H1 (cell line): ENCODE measurements at regions of chr19 and their contacts with region 1.

Region 1: GRCh38 chr19:55258828-55259539 is at the start of gene PPP6R1:
- DNase-seq: peak; percentile 83 to 99
- H3K4me3 ChIP-seq: peak within 1 kb of the TSS; percentile 79 to 89 (median 82)
- H3K27ac ChIP-seq: peak within 1 kb of the TSS; percentile 65; the same call in 1 of the 2 replicates
- H3K4me1 ChIP-seq: peaks cover under 1 to 19% (median 15%) of the 10 kb centered on the region in 4 experiments; a peak in 6 of 7 replicates
- H3K27me3 ChIP-seq: no peaks in the 10 kb centered on the region
- CTCF ChIP-seq: 0 out of 4 replicates have a peak, but pooled peaks of 1 of the 3 experiments have one; percentile 11
- EP300 ChIP-seq: no peak
- POLR2A ChIP-seq: peak in 1 of 2 experiments; percentile 82; a peak in 2 of 3 replicates
- RAD21 ChIP-seq: peak in 1 of 2 experiments; percentile 7; a peak in 1 of 4 replicates
- total RNA-seq, gene PPP6R1: 74.4 and 75.6 TPM in 2 replicates

Region 2: DNA sequence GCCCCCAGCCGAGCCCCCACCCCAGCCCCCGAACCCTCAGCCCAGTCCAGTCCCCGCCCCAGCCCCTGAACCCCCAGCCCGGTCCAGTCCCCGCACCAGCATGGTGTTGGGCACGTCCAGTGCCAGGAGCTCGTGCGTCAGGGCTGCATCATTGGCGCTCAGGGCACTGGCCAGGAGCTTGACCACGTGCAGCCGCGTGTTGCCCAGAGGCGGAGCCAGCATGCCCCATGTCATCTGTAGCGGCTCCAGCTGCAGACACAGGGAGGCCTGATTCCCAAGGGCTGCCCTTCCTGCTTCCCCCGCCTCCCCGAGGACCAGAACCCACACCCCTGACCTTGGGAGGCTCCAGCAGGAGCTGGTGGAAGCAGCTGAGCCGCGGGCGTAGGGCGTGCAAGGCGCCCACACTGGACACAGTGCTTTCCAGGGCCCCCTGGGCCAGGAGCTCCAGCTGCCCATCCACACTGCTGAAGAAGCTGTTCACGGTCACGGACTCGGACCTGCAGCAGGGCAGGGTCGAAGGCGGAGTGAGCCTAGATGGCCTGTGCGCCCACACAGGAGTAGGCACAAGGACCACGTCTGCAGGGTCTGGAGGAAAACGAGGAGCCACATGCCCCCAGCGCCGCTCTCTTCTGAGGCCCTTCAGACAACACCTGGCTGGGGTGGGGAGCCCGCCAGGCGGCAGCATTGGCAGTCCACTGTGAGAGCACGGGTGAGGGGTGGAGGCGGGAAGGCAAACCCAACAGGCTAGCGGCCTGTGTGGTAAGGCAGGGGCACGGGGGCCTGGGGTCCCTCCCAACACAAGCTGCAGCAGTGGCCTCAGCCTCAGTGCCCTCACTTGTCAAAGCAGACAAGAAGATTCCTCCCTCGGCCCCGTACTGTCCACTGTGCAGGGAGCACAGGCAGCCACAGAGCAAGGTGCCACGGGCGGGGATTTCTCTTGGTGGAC is 17.6 kb before region 1 on chr19:
- CTCF ChIA-PET with region 1: interaction called, 32 read pairs
- POLR2A ChIA-PET with region 1: interaction called, 4 read pairs
- DNase-seq: no peak
- H3K4me3 ChIP-seq: no peak overlapping the region
- H3K27ac ChIP-seq: no peak overlapping the region
- H3K4me1 ChIP-seq: no peaks in the 10 kb centered on the region
- H3K27me3 ChIP-seq: no peaks in the 10 kb centered on the region
- CTCF ChIP-seq: no peak
- EP300 ChIP-seq: no peak
- POLR2A ChIP-seq: no peak
- RAD21 ChIP-seq: no peak

Region 3: DNA sequence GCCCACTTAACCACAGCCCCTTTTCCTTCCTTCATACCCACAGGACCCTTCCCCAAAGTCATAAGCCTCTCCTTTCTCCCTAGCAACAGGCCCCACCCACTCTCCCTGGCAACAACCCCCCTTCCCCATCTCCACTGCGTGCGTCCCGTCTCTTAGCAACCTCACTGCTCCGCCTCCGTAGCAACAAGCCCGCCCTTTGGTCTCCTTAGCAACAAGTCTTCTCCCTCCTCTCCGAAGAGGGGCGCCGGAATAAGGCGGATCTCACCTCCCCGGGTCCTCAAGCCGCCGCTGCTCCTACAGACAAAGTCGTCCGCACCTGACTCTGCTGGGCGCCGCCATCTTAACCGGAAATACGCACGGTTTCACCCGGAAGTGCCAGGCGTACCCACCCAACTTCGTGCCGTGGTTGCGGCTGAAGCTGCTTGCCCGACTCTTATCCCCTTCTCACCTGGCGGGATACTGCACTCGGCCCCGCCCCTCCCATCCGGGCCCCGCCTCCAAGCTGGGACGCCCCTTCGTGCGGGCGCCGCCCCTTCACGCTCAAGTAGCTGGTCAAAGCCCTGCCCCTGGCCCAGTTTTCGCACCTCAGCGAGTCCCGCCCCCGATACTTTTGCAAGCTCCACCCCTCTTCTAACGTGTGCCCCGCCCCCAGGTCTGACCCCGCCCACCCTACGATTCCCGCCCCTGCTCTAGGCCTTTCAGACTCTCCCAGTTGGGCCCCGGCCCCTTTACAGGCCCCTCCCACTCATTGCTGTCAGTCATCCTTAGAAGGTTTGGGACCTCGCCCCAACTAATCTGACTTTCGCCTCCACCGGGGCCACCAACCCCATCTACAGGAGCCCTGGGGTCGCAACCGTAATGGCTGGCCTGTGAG is 21.0 kb after region 1 on chr19 and contains the start of gene HSPBP1:
- CTCF ChIA-PET with region 1: interaction called, 5 read pairs
- POLR2A ChIA-PET with region 1: interaction called, 28 read pairs
- DNase-seq: peak; percentile 99
- H3K4me3 ChIP-seq: peak within 1 kb of the TSS; percentile 71 to 98 (median 90)
- H3K27ac ChIP-seq: peak within 1 kb of the TSS; percentile 85
- H3K4me1 ChIP-seq: peaks cover 3 to 19% (median 7%) of the 10 kb centered on the region in 4 experiments
- H3K27me3 ChIP-seq: no peaks in the 10 kb centered on the region
- CTCF ChIP-seq: no peak
- EP300 ChIP-seq: no peak
- POLR2A ChIP-seq: peak in 1 of 2 experiments; percentile 77; a peak in 2 of 3 replicates
- RAD21 ChIP-seq: no peak
- total RNA-seq, gene HSPBP1: 63.4 and 68.8 TPM in 2 replicates